Caco-2 (cell line): ENCODE measurements at regions of chr18 and their contacts with region 1.

Region 1: DNA sequence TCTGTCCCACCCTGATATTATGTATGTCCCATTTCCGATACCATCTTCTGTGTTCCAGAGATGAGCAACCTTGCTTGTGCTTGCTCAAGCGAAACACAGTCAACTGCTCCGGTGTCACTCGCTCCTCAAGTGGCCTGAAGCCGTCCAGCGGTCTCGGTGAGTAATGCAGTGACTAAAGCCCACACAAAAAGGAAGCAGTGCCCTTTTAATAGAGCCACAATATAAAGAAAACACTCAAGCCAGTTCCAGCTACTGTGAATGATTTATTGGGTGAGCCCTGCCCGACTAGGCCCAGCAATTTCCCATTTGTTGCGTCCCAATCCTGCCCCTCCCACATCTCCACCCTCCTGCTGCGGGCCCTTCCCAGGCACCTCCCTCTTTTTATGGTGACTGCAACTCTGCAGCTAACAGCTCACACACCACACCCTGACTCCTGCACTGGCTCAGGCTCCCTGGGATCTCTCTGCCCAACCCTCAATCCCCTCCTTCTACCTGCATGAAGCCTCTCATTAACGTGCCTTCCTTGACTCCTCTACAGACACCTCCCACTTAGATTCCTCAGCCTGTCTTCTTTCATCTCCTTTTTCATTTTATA is 44.2 kb upstream of the DSC1 start:
- DNase-seq: peak; percentile 75 to 87
- H3K4me3 ChIP-seq: peak overlapping the region; percentile 7; the same call in 1 of the 2 replicates
- H3K4me3 Mint-ChIP-seq: peak overlapping the region; percentile 69
- H3K27ac Mint-ChIP-seq: peak overlapping the region; percentile 84
- H3K4me1 ChIP-seq: peaks cover 17% of the 10 kb centered on the region
- H3K4me1 Mint-ChIP-seq: peaks cover 50% of the 10 kb centered on the region
- H3K27me3 ChIP-seq: no peaks in the 10 kb centered on the region
- H3K27me3 Mint-ChIP-seq: no peaks in the 10 kb centered on the region
- CTCF ChIP-seq: peak in 1 of 2 experiments; percentile 24

Region 2: GRCh38 chr18:31138709-31139108 is 68.2 kb before region 1 on chr18:
- CTCF ChIA-PET with region 1: no interaction called
- POLR2A ChIA-PET with region 1: no interaction called
- intact Hi-C with region 1: loop called (anchors 2 kb)
- DNase-seq: no peak
- H3K4me3 ChIP-seq: no peak overlapping the region
- H3K4me3 Mint-ChIP-seq: no peak overlapping the region
- H3K27ac Mint-ChIP-seq: no peak overlapping the region
- H3K4me1 ChIP-seq: peaks cover 9% of the 10 kb centered on the region; the same call in 1 of the 2 replicates
- H3K4me1 Mint-ChIP-seq: peaks cover 18% of the 10 kb centered on the region
- H3K27me3 ChIP-seq: no peaks in the 10 kb centered on the region
- H3K27me3 Mint-ChIP-seq: no peaks in the 10 kb centered on the region
- CTCF ChIP-seq: no peak

Region 3: DNA sequence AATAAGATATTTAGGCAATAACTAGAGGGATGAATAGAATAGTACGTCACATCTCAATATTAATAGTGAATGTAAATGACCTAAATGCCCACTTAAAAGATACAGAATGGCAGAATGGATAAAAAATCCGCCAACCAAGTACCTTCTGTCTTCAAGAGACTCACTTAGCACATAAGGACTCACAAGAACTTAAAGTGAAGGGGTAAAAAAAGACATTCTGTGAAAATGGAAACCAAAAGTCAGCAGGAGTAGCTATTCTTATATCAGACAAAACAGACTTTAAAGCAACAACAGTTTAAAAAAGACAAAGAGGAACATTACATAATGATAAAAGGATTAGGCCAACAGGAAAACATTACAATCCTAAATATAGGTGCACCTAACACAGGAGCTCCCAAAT is 12.5 kb after region 1 on chr18:
- CTCF ChIA-PET with region 1: no interaction called
- POLR2A ChIA-PET with region 1: no interaction called
- intact Hi-C with region 1: no loop called
- DNase-seq: no peak
- H3K4me3 ChIP-seq: no peak overlapping the region
- H3K4me3 Mint-ChIP-seq: no peak overlapping the region
- H3K27ac Mint-ChIP-seq: no peak overlapping the region
- H3K4me1 ChIP-seq: no peaks in the 10 kb centered on the region
- H3K4me1 Mint-ChIP-seq: no peaks in the 10 kb centered on the region
- H3K27me3 ChIP-seq: no peaks in the 10 kb centered on the region
- H3K27me3 Mint-ChIP-seq: no peaks in the 10 kb centered on the region
- CTCF ChIP-seq: no peak

Region 4: GRCh38 chr18:31241900-31242409 is 35.1 kb after region 1 on chr18:
- CTCF ChIA-PET with region 1: interaction called, 6 read pairs
- POLR2A ChIA-PET with region 1: no interaction called
- intact Hi-C with region 1: loop called (anchors 1 kb)
- DNase-seq: peak; percentile 77 to 81
- H3K4me3 ChIP-seq: no peak overlapping the region
- H3K4me3 Mint-ChIP-seq: peak overlapping the region; percentile 31
- H3K27ac Mint-ChIP-seq: peak overlapping the region; percentile 79
- H3K4me1 ChIP-seq: peaks cover 42% of the 10 kb centered on the region
- H3K4me1 Mint-ChIP-seq: no peaks in the 10 kb centered on the region
- H3K27me3 ChIP-seq: no peaks in the 10 kb centered on the region
- H3K27me3 Mint-ChIP-seq: no peaks in the 10 kb centered on the region
- CTCF ChIP-seq: peak; percentile 60 to 68

Region 5: DNA sequence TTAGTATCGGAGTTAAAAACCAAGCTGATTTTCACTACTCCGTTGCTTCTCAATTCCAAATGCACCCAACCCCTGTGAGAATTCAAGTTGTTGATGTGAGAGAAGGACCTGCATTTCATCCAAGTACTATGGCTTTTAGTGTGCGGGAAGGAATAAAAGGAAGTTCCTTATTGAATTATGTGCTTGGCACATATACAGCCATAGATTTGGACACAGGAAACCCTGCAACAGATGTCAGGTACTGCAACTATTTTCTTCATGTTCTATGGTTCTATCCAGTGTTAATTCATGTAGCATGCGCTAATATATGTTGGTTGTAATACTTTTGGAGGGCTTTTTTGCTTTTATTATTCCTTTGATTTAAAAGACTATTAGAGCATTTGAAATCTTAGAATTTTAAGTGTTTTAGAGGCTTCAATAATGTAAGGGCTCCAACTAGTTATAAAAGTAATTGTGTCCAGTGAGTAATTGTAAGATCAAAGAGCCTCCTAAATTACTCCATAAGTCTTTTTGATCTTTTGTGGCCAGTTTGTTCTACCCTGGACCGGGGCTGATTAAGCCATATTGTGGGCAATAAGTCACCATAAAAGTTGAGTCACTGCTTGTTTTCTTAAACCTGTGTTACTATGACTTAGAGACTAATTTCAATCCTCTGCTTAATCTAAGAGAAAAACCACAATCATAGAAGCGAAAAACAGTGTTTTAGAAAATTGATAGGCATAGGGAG is 192.6 kb after region 1 on chr18:
- CTCF ChIA-PET with region 1: no interaction called
- POLR2A ChIA-PET with region 1: no interaction called
- intact Hi-C with region 1: loop called (anchors 10 kb)
- DNase-seq: peak; percentile 16 to 31
- H3K4me3 ChIP-seq: no peak overlapping the region
- H3K4me3 Mint-ChIP-seq: no peak overlapping the region
- H3K27ac Mint-ChIP-seq: peak overlapping the region; percentile 48
- H3K4me1 ChIP-seq: peaks cover 24% of the 10 kb centered on the region
- H3K4me1 Mint-ChIP-seq: peaks cover 16% of the 10 kb centered on the region
- H3K27me3 ChIP-seq: no peaks in the 10 kb centered on the region
- H3K27me3 Mint-ChIP-seq: no peaks in the 10 kb centered on the region
- CTCF ChIP-seq: no peak